CD8-positive, alpha-beta T cell (primary cell): ENCODE measurements at regions of chr12 and their contacts with region 1.

Region 1: DNA sequence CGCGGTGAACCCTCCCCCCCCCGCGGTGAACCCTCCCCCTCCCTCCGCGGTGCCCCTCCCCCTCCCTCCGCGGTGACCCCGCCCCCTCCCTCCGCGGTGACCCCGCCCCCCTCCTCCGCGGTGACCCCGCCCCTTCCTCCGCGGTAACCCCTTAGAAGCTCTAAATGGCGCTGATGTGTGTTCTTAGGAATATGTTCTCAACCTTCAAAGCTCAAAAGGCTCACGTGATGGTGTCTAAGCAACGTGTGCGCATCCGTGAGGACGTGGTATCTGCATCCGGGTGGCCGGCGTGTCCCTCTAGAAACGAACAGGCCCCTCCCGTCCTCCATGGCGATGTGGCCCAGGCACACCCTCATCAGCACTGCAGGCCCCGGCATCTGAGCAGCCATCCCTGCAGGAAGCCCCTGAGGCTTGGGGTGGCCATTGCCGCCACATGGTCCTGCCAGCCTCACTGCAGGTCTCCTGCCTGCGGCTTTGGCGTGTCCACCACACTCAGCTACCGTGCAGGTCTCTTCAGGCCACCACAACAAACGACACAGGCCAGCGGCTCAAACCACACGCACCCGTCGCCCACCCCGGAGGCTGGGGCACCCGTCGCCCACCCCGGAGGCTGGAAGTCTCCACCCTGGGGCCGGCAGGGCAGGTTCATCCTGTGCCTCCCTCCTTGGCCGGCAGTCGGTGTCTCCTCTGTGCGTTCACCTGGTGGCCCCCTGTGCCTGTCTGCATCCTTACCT is 14.5 kb upstream of the FBRSL1 start:
- DNase-seq: peak in 3 of 9 experiments; percentile 53 to 75 (median 64)
- ATAC-seq: peak; percentile 61
- H3K4me3 ChIP-seq: peak overlapping the region; percentile 7 to 27
- H3K4me3 Mint-ChIP-seq: peak overlapping the region; percentile 39
- H3K27ac ChIP-seq: no peak overlapping the region
- H3K27ac Mint-ChIP-seq: peak overlapping the region; percentile 73
- H3K4me1 ChIP-seq: peaks cover 20% of the 10 kb centered on the region
- H3K4me1 Mint-ChIP-seq: peaks cover 36% of the 10 kb centered on the region
- H3K27me3 ChIP-seq: no peaks in the 10 kb centered on the region
- H3K27me3 Mint-ChIP-seq: no peaks in the 10 kb centered on the region
- CTCF ChIP-seq: no peak

Region 2: GRCh38 chr12:132506328-132507160 is 31.1 kb after region 1 on chr12:
- CTCF ChIA-PET with region 1: no interaction called
- POLR2A ChIA-PET with region 1: no interaction called
- intact Hi-C with region 1: loop called in 1 of 2 experiments (anchors 1 kb)
- DNase-seq: peak; percentile 21 to 73 (median 62)
- ATAC-seq: peak; percentile 83
- H3K4me3 ChIP-seq: peak overlapping the region in 1 of 2 experiments; percentile 52
- H3K4me3 Mint-ChIP-seq: peak overlapping the region; percentile 64
- H3K27ac ChIP-seq: peak overlapping the region; percentile 45 to 54
- H3K27ac Mint-ChIP-seq: peak overlapping the region; percentile 72
- H3K4me1 ChIP-seq: peaks cover 61% of the 10 kb centered on the region
- H3K4me1 Mint-ChIP-seq: peaks cover 50% of the 10 kb centered on the region
- H3K27me3 ChIP-seq: peaks cover 0 to 3% of the 10 kb centered on the region in 2 experiments
- H3K27me3 Mint-ChIP-seq: no peaks in the 10 kb centered on the region
- CTCF ChIP-seq: no peak

Region 3: DNA sequence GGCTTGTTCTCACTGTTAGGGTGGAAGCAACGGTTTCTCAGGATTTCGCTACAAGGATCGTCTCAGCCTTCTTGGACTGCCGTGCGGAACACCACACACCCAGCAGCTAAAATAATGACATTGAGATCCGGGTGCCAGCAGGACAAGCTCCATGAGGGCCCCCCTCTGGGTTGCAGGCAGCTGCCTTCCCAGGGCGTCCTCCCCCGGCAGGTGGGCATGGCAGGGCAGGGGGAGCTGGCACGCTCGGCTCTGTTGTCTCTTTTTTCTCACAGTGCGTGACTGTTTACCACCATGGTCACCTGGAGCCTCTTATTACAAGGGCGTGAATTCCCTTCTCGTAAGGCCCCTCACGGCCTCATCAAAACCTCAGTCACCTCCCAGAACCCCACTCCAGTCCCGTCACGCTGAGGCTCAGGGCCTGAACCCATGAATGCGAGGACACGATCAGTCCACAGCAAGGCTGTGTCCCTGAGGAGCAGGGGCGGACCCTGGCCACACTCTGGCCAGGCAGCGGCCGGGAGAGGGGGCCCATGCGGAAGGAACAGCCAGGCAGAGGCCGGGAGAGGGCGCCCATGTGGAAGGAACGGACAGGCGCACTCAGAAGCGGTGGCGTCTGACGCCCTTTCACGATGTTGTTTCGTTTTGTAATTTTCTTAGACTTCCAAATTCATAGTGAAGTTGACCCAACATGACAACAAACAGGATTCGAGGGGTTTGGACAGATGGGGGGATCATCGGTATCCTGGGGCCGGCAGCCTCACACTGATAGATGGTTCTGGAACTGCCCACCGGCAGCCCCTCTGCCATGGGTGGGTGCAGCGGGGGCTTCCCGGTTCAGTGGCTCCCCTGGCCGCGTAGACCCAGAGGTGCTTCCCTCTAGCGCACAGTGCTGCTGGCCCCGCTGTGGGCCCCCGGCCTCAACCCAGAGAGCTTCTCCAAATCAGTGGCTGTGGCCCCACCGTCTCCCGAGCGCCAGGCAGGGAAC is 124.9 kb after region 1 on chr12:
- CTCF ChIA-PET with region 1: no interaction called
- POLR2A ChIA-PET with region 1: no interaction called
- intact Hi-C with region 1: no loop called
- DNase-seq: peak in 6 of 9 experiments; percentile 24 to 62 (median 48)
- ATAC-seq: peak; percentile 39
- H3K4me3 ChIP-seq: peak overlapping the region; percentile 52 to 61
- H3K4me3 Mint-ChIP-seq: peak overlapping the region; percentile 80
- H3K27ac ChIP-seq: no peak overlapping the region
- H3K27ac Mint-ChIP-seq: peak overlapping the region; percentile 13
- H3K4me1 ChIP-seq: peaks cover 16% of the 10 kb centered on the region
- H3K4me1 Mint-ChIP-seq: peaks cover 18% of the 10 kb centered on the region
- H3K27me3 ChIP-seq: peaks cover 0 to 10% of the 10 kb centered on the region in 2 experiments
- H3K27me3 Mint-ChIP-seq: peaks cover 39% of the 10 kb centered on the region
- CTCF ChIP-seq: peak; percentile 34